Right ventricle myocardium inferior (tissue), 1 donor: ENCODE measurements at regions of chr1 and their contacts with region 1.

Region 1: DNA sequence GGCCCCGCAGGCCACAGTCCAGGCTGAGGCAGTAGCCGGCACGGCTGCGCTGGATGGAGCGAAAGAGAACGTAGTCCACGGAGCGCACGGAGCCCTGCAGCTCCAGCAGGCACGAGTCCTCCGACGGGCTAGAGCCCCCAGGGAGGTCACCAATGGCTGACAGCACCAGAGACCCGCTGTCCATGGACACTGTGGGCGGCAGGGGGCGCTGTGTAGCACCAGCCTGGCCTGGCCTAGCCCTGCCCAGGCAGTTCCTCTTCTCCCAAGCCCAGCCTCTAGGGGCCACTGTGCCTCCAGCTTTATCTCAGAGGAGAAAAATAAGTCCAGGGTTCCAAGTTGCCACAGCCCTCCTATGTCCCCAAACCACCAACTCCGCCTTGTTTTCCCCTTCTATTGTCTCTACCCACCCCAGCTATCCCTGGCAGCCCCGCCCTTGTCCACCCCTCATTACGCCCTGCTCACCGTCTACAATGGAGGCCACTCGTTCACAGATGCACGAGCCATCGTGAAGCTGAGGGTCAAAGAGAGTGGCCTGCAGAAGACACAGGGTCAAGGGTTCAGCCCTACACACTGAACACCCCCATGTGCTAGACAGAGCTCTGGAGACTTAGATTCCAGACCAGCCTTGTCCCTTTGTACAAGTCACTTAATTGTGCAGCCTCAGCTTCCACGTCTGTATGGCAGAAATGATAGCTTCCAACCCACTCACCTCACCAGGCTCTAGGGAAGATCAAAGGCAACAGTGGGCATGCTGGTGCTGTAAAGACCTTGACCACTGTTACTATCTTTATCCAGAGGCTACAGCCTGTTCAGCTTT is 4.4 kb downstream of the ENTREP3 start:
- DNase-seq: peak; percentile 96
- ATAC-seq: peak; percentile 85

Region 2: GRCh38 chr1:155135415-155136028 is 115.3 kb before region 1 on chr1 and contains the start of gene SLC50A1:
- intact Hi-C with region 1: no loop called
- DNase-seq: peak; percentile 98
- ATAC-seq: peak; percentile 96
- total RNA-seq, gene SLC50A1: 9.3 TPM

Region 3: DNA sequence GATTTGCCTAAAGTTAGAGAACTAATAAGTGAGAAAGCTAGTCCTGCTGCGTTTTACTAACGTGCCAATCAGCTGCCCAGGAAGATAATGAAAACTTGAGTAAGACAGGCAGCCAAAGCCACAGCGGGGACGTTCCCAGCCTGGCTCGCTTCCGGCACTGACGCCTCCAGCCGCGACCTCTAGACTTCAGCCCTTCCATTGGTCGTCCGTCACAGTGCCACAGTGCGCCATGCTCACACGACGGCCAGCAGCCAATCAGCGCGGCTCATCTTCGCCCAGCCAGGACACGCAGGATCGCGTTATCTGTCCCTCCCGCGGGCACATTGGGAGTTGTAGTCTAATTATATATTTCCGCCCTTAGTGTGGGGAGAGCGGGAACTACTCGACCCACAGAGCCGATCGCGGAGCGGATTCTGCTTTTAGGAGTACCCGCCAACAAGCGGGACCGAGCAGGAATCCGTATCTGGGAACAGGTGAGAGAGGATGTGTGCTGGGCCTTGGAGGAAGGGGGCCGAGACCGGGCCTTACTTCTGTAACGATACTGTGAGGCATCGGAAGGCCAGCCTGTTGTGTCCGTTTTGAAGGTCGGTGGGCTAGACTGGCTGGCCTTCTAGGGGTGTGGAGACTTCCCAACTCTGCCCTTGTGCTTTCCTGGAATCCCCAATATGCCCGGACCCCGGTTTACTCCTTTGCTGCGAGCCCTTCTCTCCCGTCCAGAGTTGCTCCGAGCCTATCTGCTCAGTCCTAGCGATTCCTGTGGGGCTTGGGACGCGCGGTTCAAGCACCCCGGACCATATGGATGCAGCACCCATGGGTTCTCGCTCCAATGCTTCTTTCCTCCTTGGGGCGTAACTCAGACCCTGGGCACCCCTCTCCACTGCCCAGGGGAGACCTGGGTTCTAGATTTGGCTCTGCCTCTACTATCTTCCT is 57.9 kb after region 1 on chr1 and contains the start of gene FDPS:
- intact Hi-C with region 1: loop called (anchors 1 kb)
- DNase-seq: peak; percentile 99
- ATAC-seq: peak; percentile 100
- total RNA-seq, gene FDPS: 80.0 TPM

Region 4: GRCh38 chr1:155591770-155592169 is 340.9 kb after region 1 on chr1:
- intact Hi-C with region 1: loop called (anchors 2 kb)
- DNase-seq: no peak
- ATAC-seq: peak; percentile 71